ENCODE measurements at regions of chr17 and their contacts with region 1.

Region 1: DNA sequence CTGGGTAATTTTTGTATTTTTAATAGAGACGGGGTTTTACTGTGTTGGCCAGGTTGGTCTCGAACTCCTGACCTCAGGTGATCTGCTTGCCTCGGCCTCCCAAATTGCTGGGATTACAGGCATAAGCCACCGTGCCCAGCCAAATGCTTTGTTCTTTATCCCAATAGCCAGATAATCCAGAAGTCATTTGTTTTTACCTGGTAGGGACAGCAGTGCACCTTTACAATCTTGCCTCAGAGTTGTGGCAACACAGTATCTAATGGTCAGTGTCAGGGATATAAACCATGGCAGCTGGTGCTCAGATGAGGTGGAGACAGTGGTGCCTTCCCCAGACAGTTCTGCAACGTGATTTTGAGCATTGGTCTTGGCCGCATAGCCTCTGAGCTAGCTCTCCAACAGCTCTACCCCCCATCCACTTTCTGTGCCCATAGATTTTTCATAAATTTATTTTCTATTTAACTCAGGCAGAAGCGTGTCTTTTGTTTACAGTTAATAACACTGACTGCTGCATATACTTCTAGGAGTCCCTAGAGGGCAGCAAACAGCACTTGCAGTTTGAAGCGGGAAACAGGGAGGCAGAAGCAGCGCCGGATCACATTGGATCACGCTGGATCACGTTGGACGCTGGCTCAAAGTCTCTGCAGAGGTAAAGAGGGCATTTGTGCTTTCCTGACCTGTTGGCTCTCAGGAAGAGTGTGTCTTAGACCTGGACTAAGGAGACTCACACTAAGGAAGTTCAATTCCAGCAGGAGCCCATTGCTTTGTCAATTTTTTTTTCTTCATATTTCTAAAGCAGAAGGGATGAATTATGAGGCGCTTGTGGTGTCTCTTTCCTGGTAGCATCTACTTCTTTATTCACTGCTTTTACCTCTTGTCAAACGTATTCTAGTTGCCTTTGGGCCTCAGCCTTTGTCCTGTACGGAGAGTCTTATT is 5.1 kb upstream of the GGT6 start:
- DNase-seq: peak; percentile 90
- H3K4me3 ChIP-seq: no peak overlapping the region
- H3K27ac ChIP-seq: no peak overlapping the region
- H3K4me1 ChIP-seq: no peaks in the 10 kb centered on the region
- H3K27me3 ChIP-seq: no peaks in the 10 kb centered on the region

Region 2: DNA sequence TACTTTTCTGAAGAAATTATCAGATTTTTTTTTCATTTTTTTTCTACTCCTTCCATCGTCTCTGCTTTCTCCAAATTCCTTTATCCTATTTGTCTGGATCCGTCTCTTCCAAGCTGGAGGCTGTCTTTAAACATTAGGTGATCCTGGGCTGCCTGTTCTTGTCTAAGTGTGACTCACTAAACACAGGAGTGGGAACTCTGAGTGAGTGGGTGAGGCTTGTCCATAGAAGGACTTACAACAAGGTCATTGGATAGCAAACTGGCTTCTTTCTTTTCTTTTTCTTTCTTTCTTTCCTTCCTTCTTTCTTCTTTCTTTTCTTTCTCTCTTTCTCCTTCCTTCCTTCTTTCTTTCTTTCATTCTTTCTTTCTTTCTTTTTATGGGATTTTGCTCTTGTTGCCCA is 57.8 kb after region 1 on chr17:
- in situ Hi-C with region 1: loop called (anchors 5 kb)
- DNase-seq: peak; percentile 77
- H3K4me3 ChIP-seq: no peak overlapping the region
- H3K27ac ChIP-seq: no peak overlapping the region
- H3K4me1 ChIP-seq: peaks cover 7% of the 10 kb centered on the region; the same call in 1 of the 2 replicates
- H3K27me3 ChIP-seq: 0 out of 2 replicates have a peak, but pooled peaks cover 3% of the 10 kb centered on the region